Uterus (tissue), 4 donors: ENCODE measurements at regions of chrX and their contacts with region 1.

Region 1: GRCh38 chrX:12946838-12947544 is 27.9 kb upstream of the TMSB4X start:
- DNase-seq: peak; percentile 61 to 66
- H3K4me3 ChIP-seq: no peak overlapping the region
- H3K27ac ChIP-seq: peak overlapping the region; percentile 32 to 51
- H3K4me1 ChIP-seq: no peaks in the 10 kb centered on the region
- H3K27me3 ChIP-seq: no peaks in the 10 kb centered on the region
- CTCF ChIP-seq: peak; percentile 66 to 83 (median 78)
- POLR2A ChIP-seq: no peak

Region 2: GRCh38 chrX:13495232-13495631 is 548.2 kb after region 1 on chrX:
- intact Hi-C with region 1: loop called (anchors 10 kb)
- DNase-seq: no peak
- H3K4me3 ChIP-seq: no peak overlapping the region
- H3K27ac ChIP-seq: no peak overlapping the region
- H3K4me1 ChIP-seq: no peaks in the 10 kb centered on the region
- H3K27me3 ChIP-seq: no peaks in the 10 kb centered on the region
- CTCF ChIP-seq: no peak
- POLR2A ChIP-seq: no peak

Region 3: GRCh38 chrX:14029425-14030173 is 1082.6 kb after region 1 on chrX and contains the start of gene GEMIN8:
- intact Hi-C with region 1: loop called (anchors 10 kb)
- DNase-seq: peak; percentile 83 to 92
- H3K4me3 ChIP-seq: peak within 1 kb of the TSS; percentile 54 to 55
- H3K27ac ChIP-seq: peak within 1 kb of the TSS; percentile 76 to 79
- H3K4me1 ChIP-seq: no peaks in the 10 kb centered on the region
- H3K27me3 ChIP-seq: no peaks in the 10 kb centered on the region
- CTCF ChIP-seq: peak in 2 of 4 experiments; percentile 8 to 13
- POLR2A ChIP-seq: peak; percentile 20 to 63
- total RNA-seq, gene GEMIN8: 20.0 to 59.1 (median 31.7) TPM